Activated naive CD4-positive, alpha-beta T cell treated with anti-CD3 and anti-CD28 coated beads, Interleukin-2, amount 10 ng/mL, durations not matched to agents 7 days and 5 days (primary cell): ENCODE measurements at regions of chr10 and their contacts with region 1.

Region 1: GRCh38 chr10:101042667-101043355 is 11.8 kb downstream of the SFXN3 start:
- DNase-seq: peak; percentile 93
- H3K4me3 Mint-ChIP-seq: peak overlapping the region; percentile 96
- H3K27ac Mint-ChIP-seq: peak overlapping the region; percentile 78
- H3K4me1 Mint-ChIP-seq: peaks cover 31% of the 10 kb centered on the region
- H3K27me3 Mint-ChIP-seq: peaks cover 48% of the 10 kb centered on the region

Region 2: DNA sequence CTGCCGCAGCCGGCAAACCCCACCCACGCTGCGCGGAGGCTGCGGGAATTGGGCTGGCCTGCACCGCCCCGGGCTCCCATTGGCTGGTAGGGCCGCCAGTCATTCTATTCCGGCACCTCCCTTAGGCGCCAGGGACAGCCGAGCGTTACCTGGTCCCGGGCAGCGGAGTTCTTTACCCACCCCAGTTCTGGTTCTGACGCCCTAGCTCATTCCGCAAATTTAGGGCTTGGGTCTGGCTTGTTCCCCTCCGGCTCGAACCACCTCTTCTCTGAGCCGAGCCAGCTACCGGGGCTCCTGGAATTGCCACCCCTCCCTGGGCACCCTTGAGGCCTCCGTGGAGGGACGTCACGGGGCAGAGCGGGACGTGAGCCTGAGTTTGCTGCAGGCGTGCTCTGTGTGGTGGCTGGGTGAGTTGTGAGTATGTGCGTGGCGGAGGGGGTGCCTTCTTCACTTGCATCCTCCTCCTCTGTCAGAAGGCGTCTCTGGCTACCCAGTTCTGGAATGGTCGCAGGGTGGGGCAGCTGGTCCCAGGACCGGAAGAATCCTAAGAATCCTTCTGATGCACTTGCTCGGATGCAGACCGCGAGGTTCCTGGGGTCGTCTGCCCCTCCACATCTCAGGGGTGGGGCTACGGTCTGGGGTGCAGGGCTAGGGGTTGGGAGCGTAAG is 11.5 kb before region 1 on chr10 and contains the starts of genes PDZD7 and SFXN3:
- CTCF ChIA-PET with region 1: interaction called, 19 read pairs
- DNase-seq: peak; percentile 98
- H3K4me3 Mint-ChIP-seq: peak within 1 kb of the TSS; percentile 81
- H3K27ac Mint-ChIP-seq: peak within 1 kb of the TSS; percentile 96
- H3K4me1 Mint-ChIP-seq: peaks cover 25% of the 10 kb centered on the region
- H3K27me3 Mint-ChIP-seq: peaks cover 42% of the 10 kb centered on the region

Region 3: DNA sequence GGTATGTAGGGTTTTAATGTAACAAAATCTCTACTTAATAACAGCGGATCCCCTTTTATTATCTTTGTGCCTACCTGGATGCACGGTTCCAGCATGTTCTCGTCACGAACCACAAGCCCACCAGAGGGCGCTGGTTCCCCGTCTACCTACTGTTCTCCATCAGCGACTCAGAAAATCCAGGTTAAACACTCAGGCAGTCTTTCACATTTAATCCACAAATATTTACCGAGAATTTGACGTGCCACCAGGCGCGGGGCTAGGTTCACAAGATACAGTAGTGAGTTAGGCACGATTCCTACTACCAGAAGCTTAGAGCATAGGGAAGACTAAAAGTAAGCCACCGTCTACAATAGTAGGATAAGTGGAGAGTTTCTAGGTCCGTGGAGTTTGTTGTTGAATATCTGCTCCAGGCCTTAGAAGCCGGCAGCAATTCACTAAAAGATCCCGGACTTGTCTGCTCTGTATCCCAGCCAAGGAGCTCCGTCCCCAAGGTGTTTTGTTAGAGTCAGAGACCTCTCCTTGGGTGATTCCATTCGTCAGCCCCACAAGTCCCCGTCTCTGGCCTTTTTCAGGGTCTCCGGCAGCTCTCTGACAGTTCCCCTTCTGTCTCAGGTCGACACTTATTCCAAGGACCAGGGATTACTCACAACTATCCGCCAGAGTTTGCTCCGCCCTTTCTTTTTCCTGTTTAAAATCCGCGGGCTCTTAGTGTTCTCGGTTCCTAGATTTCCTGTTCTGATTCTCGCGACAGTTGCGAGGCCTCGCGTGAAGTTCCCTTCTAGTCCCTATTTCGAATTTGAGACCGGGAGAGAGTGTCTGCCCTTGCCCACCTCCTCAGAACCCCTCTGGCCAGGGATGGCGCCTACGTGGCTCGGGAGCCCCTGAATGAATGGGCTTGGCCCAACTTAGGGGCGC is 17.5 kb after region 1 on chr10:
- CTCF ChIA-PET with region 1: interaction called, 67 read pairs
- DNase-seq: peak; percentile 94
- H3K4me3 Mint-ChIP-seq: peak overlapping the region; percentile 75
- H3K27ac Mint-ChIP-seq: peak overlapping the region; percentile 81
- H3K4me1 Mint-ChIP-seq: peaks cover 53% of the 10 kb centered on the region
- H3K27me3 Mint-ChIP-seq: peaks cover 39% of the 10 kb centered on the region

Region 4: GRCh38 chr10:101067356-101068083 is 24.7 kb after region 1 on chr10:
- CTCF ChIA-PET with region 1: interaction called, 67 read pairs
- DNase-seq: peak; percentile 87
- H3K4me3 Mint-ChIP-seq: peak overlapping the region; percentile 67
- H3K27ac Mint-ChIP-seq: no peak overlapping the region
- H3K4me1 Mint-ChIP-seq: peaks cover 30% of the 10 kb centered on the region
- H3K27me3 Mint-ChIP-seq: peaks cover 78% of the 10 kb centered on the region

Region 5: DNA sequence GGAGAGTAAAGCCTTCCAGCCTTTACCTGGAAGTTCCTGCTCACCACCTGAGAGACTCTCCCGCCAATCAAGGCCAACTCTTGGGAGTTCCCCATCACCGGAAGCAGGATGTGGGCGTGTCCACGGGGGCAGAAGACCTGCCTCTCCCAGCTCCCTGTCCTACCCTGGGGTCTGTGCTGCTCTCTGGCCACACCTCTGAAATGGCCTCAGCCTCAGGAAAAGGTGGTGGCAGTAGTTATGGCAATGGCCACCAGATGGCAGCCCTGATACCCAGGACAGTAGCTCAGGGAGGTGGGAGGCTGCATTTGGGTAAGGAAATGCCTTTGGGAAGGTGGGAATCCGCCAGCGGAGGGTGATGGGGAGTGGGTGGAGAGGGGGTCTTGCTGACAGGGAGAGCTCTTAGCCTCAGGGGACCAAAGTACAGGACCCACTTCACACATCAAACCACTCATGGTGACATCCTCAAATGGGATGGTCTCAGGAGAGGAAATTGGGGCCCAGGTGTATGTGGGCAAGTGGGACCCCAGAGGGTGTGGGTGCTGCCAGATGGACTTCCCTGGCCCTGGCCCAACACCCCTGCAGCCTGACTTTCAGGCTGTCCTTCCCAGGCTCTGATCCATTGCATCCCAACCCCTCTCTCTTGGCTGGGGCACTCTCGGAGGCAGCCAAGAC is 52.9 kb after region 1 on chr10:
- CTCF ChIA-PET with region 1: interaction called, 23 read pairs
- DNase-seq: peak; percentile 83
- H3K4me3 Mint-ChIP-seq: no peak overlapping the region
- H3K27ac Mint-ChIP-seq: peak overlapping the region; percentile 68
- H3K4me1 Mint-ChIP-seq: no peaks in the 10 kb centered on the region
- H3K27me3 Mint-ChIP-seq: peaks cover 82% of the 10 kb centered on the region